Activated CD8-positive, alpha-beta T cell treated with anti-CD3 and anti-CD28 coated beads for 36 hours (primary cell): ENCODE measurements at regions of chr7 and their contacts with region 1.

Region 1: GRCh38 chr7:102404005-102404861 is 8.1 kb downstream of the PRKRIP1 start:
- DNase-seq: peak; percentile 59
- ATAC-seq: peak; percentile 100
- H3K4me3 Mint-ChIP-seq: no peak overlapping the region
- H3K27ac Mint-ChIP-seq: no peak overlapping the region
- H3K4me1 Mint-ChIP-seq: peaks cover 6% of the 10 kb centered on the region
- H3K27me3 Mint-ChIP-seq: no peaks in the 10 kb centered on the region
- CTCF ChIP-seq: peak; percentile 70

Region 2: DNA sequence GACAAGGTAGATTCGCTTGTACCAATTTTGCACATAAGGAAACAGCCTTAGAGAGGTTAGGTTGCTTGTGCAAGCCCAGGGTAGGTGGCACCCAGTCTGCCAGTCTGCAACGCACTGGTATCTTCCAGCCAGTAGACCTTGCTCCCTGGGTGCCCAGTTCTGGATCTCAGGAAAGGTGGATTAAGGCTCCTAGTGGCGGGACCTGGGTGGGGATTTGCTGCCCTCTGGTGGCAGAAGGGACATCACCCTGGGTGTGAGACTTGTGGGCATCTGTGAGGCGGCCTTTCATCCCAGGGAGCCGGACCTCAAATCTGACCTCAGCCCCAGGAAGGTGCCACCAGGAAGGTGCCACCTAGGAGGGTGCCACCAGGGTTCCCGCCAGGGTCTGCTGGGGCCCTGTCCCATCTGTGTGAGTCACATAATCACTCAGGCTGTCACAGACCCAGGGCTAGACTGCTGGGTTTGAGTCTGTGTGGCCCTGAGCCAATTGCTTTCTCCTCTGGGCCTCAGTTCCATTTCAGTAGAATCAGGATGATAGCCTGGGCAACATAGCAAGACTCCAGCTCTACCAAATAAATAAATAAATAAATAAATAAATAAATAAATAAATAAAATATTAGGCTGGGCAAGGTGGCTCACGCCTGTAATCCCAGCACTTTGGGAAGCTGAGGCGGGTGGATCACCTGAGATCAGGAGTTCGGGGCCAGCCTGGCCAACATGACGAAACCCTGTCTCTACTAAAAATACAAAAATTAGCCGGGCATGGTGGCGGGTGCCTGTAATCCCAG is 13.3 kb before region 1 on chr7:
- CTCF ChIA-PET with region 1: interaction called, 24 read pairs
- POLR2A ChIA-PET with region 1: interaction called, 9 read pairs
- intact Hi-C with region 1: no loop called
- DNase-seq: peak; percentile 78
- ATAC-seq: peak; percentile 75
- H3K4me3 Mint-ChIP-seq: no peak overlapping the region
- H3K27ac Mint-ChIP-seq: no peak overlapping the region
- H3K4me1 Mint-ChIP-seq: peaks cover 5% of the 10 kb centered on the region
- H3K27me3 Mint-ChIP-seq: no peaks in the 10 kb centered on the region
- CTCF ChIP-seq: peak; percentile 79

Region 3: DNA sequence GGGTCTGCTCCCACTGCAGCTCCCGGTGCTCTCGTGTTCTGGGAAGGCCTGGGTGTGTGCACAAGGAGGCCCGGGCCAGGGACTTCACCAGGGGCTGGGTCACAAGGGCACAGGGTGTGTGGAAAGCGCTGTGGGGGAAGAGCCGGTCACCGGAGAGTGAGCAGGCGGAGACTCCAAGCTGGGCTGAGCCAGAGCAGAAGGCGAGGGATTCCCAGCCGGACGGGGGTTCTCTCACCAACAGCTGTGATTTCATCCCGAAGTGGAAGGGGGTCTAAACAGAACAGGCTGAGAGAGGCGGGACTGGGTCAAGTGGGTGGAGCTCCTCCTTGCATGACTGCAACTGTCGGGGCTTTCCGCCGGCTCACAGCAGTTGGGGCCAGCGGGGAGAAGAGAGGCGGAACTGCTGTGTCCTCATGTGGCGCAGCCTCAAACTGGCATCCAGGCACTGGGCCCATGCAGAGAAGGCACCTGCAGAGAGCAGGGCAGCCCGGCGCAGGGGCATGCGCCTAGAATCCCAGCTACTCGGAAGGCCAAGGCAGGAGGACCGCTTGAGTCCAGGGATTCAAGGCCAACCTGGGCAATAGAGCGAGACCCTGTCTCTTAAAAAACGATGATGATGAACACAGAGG is 21.5 kb after region 1 on chr7:
- CTCF ChIA-PET with region 1: interaction called, 38 read pairs
- POLR2A ChIA-PET with region 1: interaction called, 147 read pairs
- intact Hi-C with region 1: no loop called
- DNase-seq: peak; percentile 93
- ATAC-seq: peak; percentile 80
- H3K4me3 Mint-ChIP-seq: peak overlapping the region; percentile 75
- H3K27ac Mint-ChIP-seq: peak overlapping the region; percentile 98
- H3K4me1 Mint-ChIP-seq: peaks cover 65% of the 10 kb centered on the region
- H3K27me3 Mint-ChIP-seq: no peaks in the 10 kb centered on the region
- CTCF ChIP-seq: no peak

Region 4: GRCh38 chr7:102450242-102450641 is 46.0 kb after region 1 on chr7:
- CTCF ChIA-PET with region 1: interaction called, 34 read pairs
- POLR2A ChIA-PET with region 1: no interaction called
- intact Hi-C with region 1: loop called (anchors 5 kb)
- DNase-seq: peak; percentile 68
- ATAC-seq: peak; percentile 84
- H3K4me3 Mint-ChIP-seq: no peak overlapping the region
- H3K27ac Mint-ChIP-seq: no peak overlapping the region
- H3K4me1 Mint-ChIP-seq: peaks cover 4% of the 10 kb centered on the region
- H3K27me3 Mint-ChIP-seq: no peaks in the 10 kb centered on the region
- CTCF ChIP-seq: peak; percentile 44